Heart right ventricle (tissue), 16 donors: ENCODE measurements at regions of chr4 and their contacts with region 1.

Region 1: DNA sequence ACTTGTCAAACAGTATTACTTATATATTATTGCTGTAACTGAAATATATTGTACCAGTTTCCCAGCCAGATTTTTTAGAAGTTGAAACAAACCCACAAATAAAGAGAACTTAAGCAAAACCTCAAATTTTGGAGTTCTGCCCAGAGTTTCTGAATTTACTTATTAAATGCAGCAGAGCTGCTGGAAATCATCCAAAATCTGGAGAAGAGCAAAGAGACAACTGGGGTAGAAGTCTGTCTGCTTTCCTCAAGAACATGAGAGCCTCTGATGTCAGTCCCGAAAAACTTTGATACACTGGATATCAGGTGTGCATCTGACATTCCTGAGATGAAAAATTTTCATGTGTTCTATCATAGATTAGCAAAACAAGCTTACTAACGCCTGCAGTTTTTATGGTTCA is 325.9 kb downstream of the NR3C2 start:
- DNase-seq: peak in 1 of 2 donors; percentile 17
- ATAC-seq: peak in 1 of 8 donors; percentile 29
- H3K4me3 ChIP-seq: no peak overlapping the region
- H3K27ac ChIP-seq: no peak overlapping the region
- H3K4me1 ChIP-seq: peaks cover 0 to 12% (median 5%) of the 10 kb centered on the region in 9 donors
- H3K27me3 ChIP-seq: no peaks in the 10 kb centered on the region
- CTCF ChIP-seq: no peak

Region 2: DNA sequence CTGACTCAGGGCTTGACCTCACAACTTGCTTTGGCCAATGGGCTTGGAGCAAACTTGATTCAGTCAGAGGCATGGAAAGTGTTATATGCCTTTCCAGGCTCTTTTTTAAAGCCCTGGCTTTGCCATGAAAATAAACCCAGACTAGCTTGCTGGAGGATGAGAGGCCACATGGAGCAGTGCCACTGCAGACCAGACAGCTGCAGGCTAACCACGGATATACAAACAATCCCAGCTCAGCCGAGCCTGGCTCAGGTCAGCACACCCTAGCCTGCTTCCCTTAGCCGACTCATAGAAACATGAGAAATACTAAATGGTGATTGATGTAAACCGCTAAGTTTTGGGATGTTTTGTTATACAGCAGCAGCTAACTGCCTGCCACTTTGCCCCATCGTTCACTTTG is 39.3 kb before region 1 on chr4:
- intact Hi-C with region 1: no loop called
- DNase-seq: no peak
- ATAC-seq: no peak
- H3K4me3 ChIP-seq: no peak overlapping the region
- H3K27ac ChIP-seq: peak overlapping the region in 1 of 10 donors; percentile 24
- H3K4me1 ChIP-seq: peaks cover 0 to 30% (median 14%) of the 10 kb centered on the region in 9 donors
- H3K27me3 ChIP-seq: no peaks in the 10 kb centered on the region
- CTCF ChIP-seq: no peak

Region 3: GRCh38 chr4:148126825-148127224 is 10.6 kb after region 1 on chr4:
- intact Hi-C with region 1: loop called in 1 of 10 experiments (anchors 2 kb)
- DNase-seq: no peak
- ATAC-seq: no peak
- H3K4me3 ChIP-seq: no peak overlapping the region
- H3K27ac ChIP-seq: no peak overlapping the region
- H3K4me1 ChIP-seq: no peaks in the 10 kb centered on the region
- H3K27me3 ChIP-seq: no peaks in the 10 kb centered on the region
- CTCF ChIP-seq: no peak

Region 4: GRCh38 chr4:148151806-148152205 is 35.5 kb after region 1 on chr4:
- intact Hi-C with region 1: no loop called
- DNase-seq: no peak
- ATAC-seq: no peak
- H3K4me3 ChIP-seq: no peak overlapping the region
- H3K27ac ChIP-seq: no peak overlapping the region
- H3K4me1 ChIP-seq: no peaks in the 10 kb centered on the region
- H3K27me3 ChIP-seq: no peaks in the 10 kb centered on the region
- CTCF ChIP-seq: no peak